Endothelial cell of umbilical vein (primary cell): ENCODE measurements at regions of chr20 and their contacts with region 1.

Region 1: GRCh38 chr20:51930775-51931174 is 128.5 kb upstream of the SALL4 start:
- DNase-seq: peak; percentile 95
- H3K4me3 ChIP-seq: no peak overlapping the region
- H3K27ac ChIP-seq: peak overlapping the region; percentile 79
- H3K4me1 ChIP-seq: peaks cover 51% of the 10 kb centered on the region
- H3K27me3 ChIP-seq: no peaks in the 10 kb centered on the region
- CTCF ChIP-seq: no peak
- POLR2A ChIP-seq: no peak

Region 2: GRCh38 chr20:51678026-51678697 is 252.6 kb before region 1 on chr20:
- CTCF ChIA-PET with region 1: no interaction called
- POLR2A ChIA-PET with region 1: no interaction called
- dilution Hi-C with region 1: no loop called
- intact Hi-C with region 1: no loop called
- DNase-seq: no peak
- H3K4me3 ChIP-seq: no peak overlapping the region
- H3K27ac ChIP-seq: no peak overlapping the region
- H3K4me1 ChIP-seq: no peaks in the 10 kb centered on the region
- H3K27me3 ChIP-seq: no peaks in the 10 kb centered on the region
- CTCF ChIP-seq: no peak
- POLR2A ChIP-seq: no peak

Region 3: DNA sequence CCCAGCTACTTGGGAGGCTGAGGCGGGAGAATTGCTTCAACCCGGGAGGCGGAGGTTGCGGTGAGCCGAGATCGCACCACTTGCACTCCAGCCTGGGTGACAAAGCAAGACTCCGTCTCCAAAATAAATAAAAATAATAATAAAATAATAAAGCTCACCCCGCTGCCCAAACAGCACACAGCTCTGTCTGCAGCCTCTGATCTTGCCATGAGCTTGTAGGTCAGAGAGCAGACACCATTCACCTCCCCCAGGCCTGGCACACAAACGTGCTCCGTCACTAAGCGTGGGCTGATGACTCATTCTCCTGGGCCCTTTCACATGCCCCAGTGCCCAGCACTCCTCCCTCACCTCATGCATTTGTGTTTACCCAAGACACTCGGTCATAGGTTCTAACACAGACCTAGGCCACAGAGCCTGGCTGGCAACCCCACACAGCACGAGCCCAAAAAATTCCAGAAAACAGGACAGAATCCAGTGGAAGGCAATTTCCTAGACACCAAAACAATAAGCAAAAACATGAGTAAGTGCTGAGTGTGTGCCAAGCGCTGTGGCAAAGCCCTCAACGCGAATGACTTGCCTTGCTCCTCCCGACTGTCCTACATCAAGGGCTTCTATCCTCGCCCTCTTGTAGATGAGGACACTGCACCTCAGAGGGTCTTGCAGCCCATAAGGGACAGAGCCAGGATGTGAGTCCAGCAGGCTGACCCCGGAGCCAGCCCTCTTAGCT is 180.6 kb before region 1 on chr20:
- CTCF ChIA-PET with region 1: no interaction called
- POLR2A ChIA-PET with region 1: no interaction called
- dilution Hi-C with region 1: no loop called
- intact Hi-C with region 1: loop called (anchors 5 kb)
- DNase-seq: peak; percentile 94
- H3K4me3 ChIP-seq: no peak overlapping the region
- H3K27ac ChIP-seq: peak overlapping the region; percentile 52
- H3K4me1 ChIP-seq: peaks cover 37% of the 10 kb centered on the region
- H3K27me3 ChIP-seq: no peaks in the 10 kb centered on the region
- CTCF ChIP-seq: no peak
- POLR2A ChIP-seq: no peak

Region 4: GRCh38 chr20:51886891-51887608 is 43.7 kb before region 1 on chr20:
- CTCF ChIA-PET with region 1: no interaction called
- POLR2A ChIA-PET with region 1: no interaction called
- dilution Hi-C with region 1: no loop called
- intact Hi-C with region 1: loop called (anchors 1 kb)
- DNase-seq: peak; percentile 39
- H3K4me3 ChIP-seq: no peak overlapping the region
- H3K27ac ChIP-seq: peak overlapping the region; percentile 18
- H3K4me1 ChIP-seq: peaks cover 7% of the 10 kb centered on the region
- H3K27me3 ChIP-seq: no peaks in the 10 kb centered on the region
- CTCF ChIP-seq: no peak
- POLR2A ChIP-seq: no peak

Region 5: GRCh38 chr20:51958096-51959065 is 27.6 kb after region 1 on chr20:
- CTCF ChIA-PET with region 1: interaction called, 5 read pairs
- POLR2A ChIA-PET with region 1: no interaction called
- dilution Hi-C with region 1: no loop called
- intact Hi-C with region 1: loop called (anchors 2 kb)
- DNase-seq: no peak
- H3K4me3 ChIP-seq: peak overlapping the region in 1 of 3 experiments; percentile 49
- H3K27ac ChIP-seq: peak overlapping the region; percentile 58
- H3K4me1 ChIP-seq: peaks cover 24% of the 10 kb centered on the region
- H3K27me3 ChIP-seq: no peaks in the 10 kb centered on the region
- CTCF ChIP-seq: no peak
- POLR2A ChIP-seq: no peak

Region 6: DNA sequence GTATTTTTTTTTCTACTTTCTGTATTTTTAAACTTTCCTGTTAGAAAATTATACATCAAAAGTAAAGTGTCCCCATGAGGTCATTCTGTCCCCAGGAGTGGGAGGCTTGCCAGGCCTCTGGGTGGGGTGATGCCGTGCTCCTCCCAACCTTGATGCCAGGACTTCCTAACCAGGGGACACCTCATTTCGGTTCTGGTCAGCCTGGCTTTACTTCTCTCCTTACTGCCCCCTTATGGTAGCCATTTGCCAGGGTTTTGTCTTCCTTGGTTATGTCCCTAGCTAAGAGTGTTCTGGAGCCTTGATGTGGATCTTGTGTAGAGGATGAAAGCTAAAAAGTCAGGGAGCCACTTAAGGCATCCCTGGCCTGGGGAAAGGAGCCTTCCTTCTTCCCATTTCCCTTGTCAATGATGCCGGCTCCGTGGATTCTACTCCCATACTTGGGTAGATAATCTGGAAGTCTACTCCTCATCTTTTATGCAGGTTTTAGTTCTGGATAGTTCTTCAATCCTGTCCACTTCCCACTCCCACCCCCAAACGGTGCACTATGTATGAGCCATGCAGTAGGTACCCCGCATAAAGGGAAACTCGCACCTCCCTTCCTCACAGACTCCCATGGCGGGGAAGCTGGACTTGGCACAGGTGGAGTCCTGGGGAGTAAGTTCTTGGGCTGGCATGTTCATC is 35.7 kb after region 1 on chr20:
- CTCF ChIA-PET with region 1: interaction called, 13 read pairs
- POLR2A ChIA-PET with region 1: interaction called, 5 read pairs
- dilution Hi-C with region 1: no loop called
- intact Hi-C with region 1: no loop called
- DNase-seq: peak; percentile 77
- H3K4me3 ChIP-seq: no peak overlapping the region
- H3K27ac ChIP-seq: no peak overlapping the region
- H3K4me1 ChIP-seq: no peaks in the 10 kb centered on the region
- H3K27me3 ChIP-seq: no peaks in the 10 kb centered on the region
- CTCF ChIP-seq: peak; percentile 73 to 74
- POLR2A ChIP-seq: no peak

Region 7: GRCh38 chr20:51984931-51985415 is 54.2 kb after region 1 on chr20:
- CTCF ChIA-PET with region 1: interaction called, 4 read pairs
- POLR2A ChIA-PET with region 1: no interaction called
- dilution Hi-C with region 1: no loop called
- intact Hi-C with region 1: loop called (anchors 5 kb)
- DNase-seq: peak; percentile 96
- H3K4me3 ChIP-seq: no peak overlapping the region
- H3K27ac ChIP-seq: peak overlapping the region; percentile 82
- H3K4me1 ChIP-seq: peaks cover 13% of the 10 kb centered on the region
- H3K27me3 ChIP-seq: no peaks in the 10 kb centered on the region
- CTCF ChIP-seq: no peak
- POLR2A ChIP-seq: no peak

Region 8: DNA sequence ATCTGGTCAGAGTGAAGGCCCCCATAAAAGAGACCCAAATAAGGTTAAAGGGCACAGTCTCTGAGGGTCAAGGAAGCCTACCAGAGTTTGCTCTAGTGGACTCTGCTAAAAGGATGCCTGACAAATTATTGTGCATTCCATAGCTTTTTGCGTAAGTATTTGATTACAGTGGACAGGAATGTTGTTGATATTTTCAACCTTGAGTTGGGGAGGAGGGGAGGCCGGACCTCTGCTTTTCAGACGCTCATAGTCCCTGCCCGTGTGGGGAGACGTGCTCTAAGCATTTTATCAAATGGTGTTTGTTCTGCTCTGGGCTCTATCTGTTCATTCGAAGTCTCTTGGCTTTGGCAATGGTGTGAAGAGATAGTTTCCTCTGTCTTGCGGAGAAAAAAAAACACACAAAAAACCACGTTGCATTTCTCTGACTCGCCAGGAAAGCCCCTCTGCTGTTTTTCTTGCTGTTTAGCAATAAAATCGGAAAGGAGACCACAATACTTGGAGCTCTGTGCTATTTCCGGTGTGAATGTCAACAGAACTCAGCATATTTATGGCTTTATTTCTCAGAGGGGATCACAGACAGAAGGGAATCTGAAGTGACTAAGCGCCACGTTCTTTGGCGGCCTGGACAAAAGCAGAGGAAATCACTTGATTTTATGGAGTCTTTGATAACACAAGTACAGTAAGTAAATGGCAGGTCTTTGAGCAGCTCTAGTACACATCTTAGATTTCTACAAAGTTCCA is 101.0 kb after region 1 on chr20:
- CTCF ChIA-PET with region 1: no interaction called
- POLR2A ChIA-PET with region 1: no interaction called
- dilution Hi-C with region 1: no loop called
- intact Hi-C with region 1: loop called (anchors 5 kb)
- DNase-seq: peak; percentile 98
- H3K4me3 ChIP-seq: no peak overlapping the region
- H3K27ac ChIP-seq: peak overlapping the region; percentile 95
- H3K4me1 ChIP-seq: peaks cover 28% of the 10 kb centered on the region
- H3K27me3 ChIP-seq: no peaks in the 10 kb centered on the region
- CTCF ChIP-seq: no peak
- POLR2A ChIP-seq: no peak

Region 9: GRCh38 chr20:52047811-52048764 is 117.3 kb after region 1 on chr20:
- CTCF ChIA-PET with region 1: no interaction called
- POLR2A ChIA-PET with region 1: no interaction called
- dilution Hi-C with region 1: no loop called
- intact Hi-C with region 1: no loop called
- DNase-seq: peak; percentile 26
- H3K4me3 ChIP-seq: no peak overlapping the region
- H3K27ac ChIP-seq: no peak overlapping the region
- H3K4me1 ChIP-seq: no peaks in the 10 kb centered on the region
- H3K27me3 ChIP-seq: no peaks in the 10 kb centered on the region
- CTCF ChIP-seq: no peak
- POLR2A ChIP-seq: no peak